ENCODE measurements at regions of chr12 and their contacts with region 1.

Region 1: GRCh38 chr12:120649442-120650232 is 9.2 kb downstream of the CABP1 start:
- DNase-seq: no peak
- H3K4me3 ChIP-seq: peak overlapping the region; percentile 46 to 56 (median 49)
- H3K27ac ChIP-seq: peak overlapping the region; percentile 43 to 76 (median 73)
- H3K4me1 ChIP-seq: peaks cover 38 to 56% (median 44%) of the 10 kb centered on the region in 4 donors
- H3K27me3 ChIP-seq: peaks cover 0 to 26% (median 7%) of the 10 kb centered on the region in 4 donors
- CTCF ChIP-seq: peak in 1 of 3 experiments; percentile 25
- EP300 ChIP-seq: no peak
- POLR2A ChIP-seq: no peak

Region 2: DNA sequence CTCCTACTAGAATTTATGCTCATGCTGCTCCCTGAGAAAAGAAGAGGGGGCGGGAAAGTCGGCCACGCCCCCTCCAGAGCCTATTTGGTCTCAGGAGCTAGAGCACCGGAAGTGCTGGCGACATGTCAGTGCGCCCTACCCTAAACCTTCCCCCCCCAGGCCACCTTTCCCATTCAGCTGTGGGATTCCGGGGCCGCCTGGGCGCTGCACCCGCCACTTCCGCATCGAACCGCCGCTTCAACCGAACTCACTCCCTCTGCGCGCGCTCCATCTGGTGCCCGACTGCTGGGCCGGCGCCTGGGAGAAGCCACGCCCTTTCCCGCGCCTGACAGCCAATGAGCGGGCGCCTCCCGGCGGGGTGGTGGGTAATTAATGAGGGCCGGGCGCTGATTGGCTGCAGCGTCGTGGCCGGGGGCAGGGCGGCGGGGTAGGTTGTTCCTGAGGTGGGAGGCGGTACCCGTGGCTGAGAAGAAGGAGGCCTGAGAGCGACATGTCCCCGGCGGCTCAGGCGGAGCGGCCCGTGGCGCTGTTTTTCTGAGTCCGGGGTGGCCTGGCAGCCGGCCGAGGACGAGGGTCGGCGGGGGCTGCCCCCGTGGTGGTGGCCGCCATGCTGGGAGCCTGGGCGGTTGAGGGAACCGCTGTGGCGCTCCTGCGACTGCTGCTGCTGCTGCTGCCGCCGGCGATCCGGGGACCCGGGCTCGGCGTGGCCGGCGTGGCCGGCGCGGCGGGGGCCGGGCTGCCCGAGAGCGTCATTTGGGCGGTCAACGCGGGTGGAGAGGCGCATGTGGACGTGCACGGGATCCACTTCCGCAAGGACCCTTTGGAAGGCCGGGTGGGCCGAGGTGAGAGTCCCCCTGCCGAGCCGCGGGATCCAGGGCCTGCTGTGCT is 37.3 kb after region 1 on chr12 and contains the start of gene MLEC:
- intact Hi-C with region 1: loop called (anchors 5 kb)
- DNase-seq: peak; percentile 100
- H3K4me3 ChIP-seq: peak within 1 kb of the TSS; percentile 84 to 98 (median 88)
- H3K27ac ChIP-seq: peak within 1 kb of the TSS; percentile 94 to 96 (median 94)
- H3K4me1 ChIP-seq: peaks cover 39 to 55% (median 48%) of the 10 kb centered on the region in 4 donors
- H3K27me3 ChIP-seq: no peaks in the 10 kb centered on the region
- CTCF ChIP-seq: peak in 2 of 3 experiments; percentile 10 to 26
- EP300 ChIP-seq: no peak
- POLR2A ChIP-seq: no peak
- total RNA-seq, gene MLEC: 37.8 to 55.5 (median 46.3) TPM

Region 3: GRCh38 chr12:120710031-120710804 is 60.6 kb after region 1 on chr12 and contains the start of gene UNC119B:
- intact Hi-C with region 1: loop called (anchors 2 kb)
- DNase-seq: no peak
- H3K4me3 ChIP-seq: peak within 1 kb of the TSS; percentile 70 to 97 (median 80)
- H3K27ac ChIP-seq: peak within 1 kb of the TSS; percentile 89 to 93 (median 91)
- H3K4me1 ChIP-seq: peaks cover 17 to 36% (median 33%) of the 10 kb centered on the region in 4 donors
- H3K27me3 ChIP-seq: no peaks in the 10 kb centered on the region
- CTCF ChIP-seq: no peak
- EP300 ChIP-seq: no peak
- POLR2A ChIP-seq: no peak
- total RNA-seq, gene UNC119B: 20.0 to 30.8 (median 28.5) TPM

Region 4: GRCh38 chr12:120971299-120972179 is 321.9 kb after region 1 on chr12:
- intact Hi-C with region 1: loop called (anchors 5 kb)
- DNase-seq: no peak
- H3K4me3 ChIP-seq: no peak overlapping the region
- H3K27ac ChIP-seq: no peak overlapping the region
- H3K4me1 ChIP-seq: no peaks in the 10 kb centered on the region
- H3K27me3 ChIP-seq: no peaks in the 10 kb centered on the region
- CTCF ChIP-seq: peak; percentile 69 to 77 (median 72)
- EP300 ChIP-seq: no peak
- POLR2A ChIP-seq: no peak